MCF 10A (cell line): ENCODE measurements at regions of chrX and their contacts with region 1.

Region 1: GRCh38 chrX:56788717-56789122 is 59.7 kb downstream of the NBDY start:
- DNase-seq: no peak
- H3K4me3 Mint-ChIP-seq: no peak overlapping the region
- H3K27ac Mint-ChIP-seq: no peak overlapping the region
- H3K4me1 Mint-ChIP-seq: no peaks in the 10 kb centered on the region
- H3K27me3 Mint-ChIP-seq: peaks cover 41% of the 10 kb centered on the region
- CTCF ChIP-seq: no peak

Region 2: DNA sequence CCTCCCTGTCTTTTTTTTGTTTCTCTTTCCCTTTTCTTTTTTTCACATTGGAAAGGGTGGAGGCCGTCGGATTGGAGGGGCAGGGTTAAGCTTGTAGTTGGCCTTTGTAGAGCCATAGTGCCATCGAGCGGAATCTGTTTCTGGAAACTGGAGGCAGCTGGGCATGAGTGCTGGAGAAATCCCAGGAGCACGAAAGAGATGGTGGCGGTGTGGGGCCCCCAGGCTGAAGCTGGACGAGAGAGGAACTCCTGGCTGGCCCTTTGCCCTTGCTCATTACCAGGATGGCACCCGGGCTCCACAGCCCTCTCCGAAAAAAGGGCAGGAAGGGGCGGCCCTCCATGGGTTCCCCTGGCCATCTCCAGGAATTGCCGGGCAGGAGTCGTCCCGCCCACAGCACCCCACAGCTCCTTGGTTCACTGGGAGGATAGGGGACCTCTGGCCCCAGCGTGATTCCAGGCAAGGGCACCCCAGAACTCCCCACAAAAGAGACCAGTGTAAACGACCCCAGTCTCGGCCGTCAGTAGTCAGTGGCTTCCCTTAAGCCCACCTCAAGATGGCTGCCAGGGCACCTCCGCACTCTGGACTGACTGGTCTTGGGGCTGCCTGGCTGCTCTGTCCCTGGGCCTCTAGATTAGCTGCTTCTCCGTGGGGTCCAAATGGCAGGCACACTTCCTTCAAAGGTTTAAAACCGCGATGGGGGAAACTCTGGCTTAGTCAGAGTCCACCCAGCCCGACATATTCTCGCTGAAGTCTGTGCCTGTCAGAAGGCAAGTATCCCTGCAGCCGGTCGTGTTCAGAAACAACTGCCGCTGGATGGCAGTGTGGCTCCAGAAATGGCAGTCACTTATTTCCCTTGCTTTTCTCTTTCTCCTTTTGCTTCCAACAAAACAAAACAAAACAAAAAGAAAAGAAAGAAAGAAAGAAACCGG is 14.5 kb after region 1 on chrX:
- CTCF ChIA-PET with region 1: interaction called, 10 read pairs
- POLR2A ChIA-PET with region 1: no interaction called
- intact Hi-C with region 1: no loop called
- DNase-seq: peak; percentile 77
- H3K4me3 Mint-ChIP-seq: peak overlapping the region; percentile 78
- H3K27ac Mint-ChIP-seq: no peak overlapping the region
- H3K4me1 Mint-ChIP-seq: peaks cover 13% of the 10 kb centered on the region
- H3K27me3 Mint-ChIP-seq: peaks cover 36% of the 10 kb centered on the region
- CTCF ChIP-seq: peak; percentile 70